Activated B cell treated with CpG ODN at 0.5 μM for 24 hours (primary cell): ENCODE measurements at regions of chr3 and their contacts with region 1.

Region 1: GRCh38 chr3:12810013-12810780 is 13.7 kb downstream of the CAND2 start:
- DNase-seq: peak; percentile 93
- ATAC-seq: peak; percentile 100
- H3K4me3 Mint-ChIP-seq: peak overlapping the region; percentile 69
- H3K27ac Mint-ChIP-seq: peak overlapping the region; percentile 50
- H3K4me1 Mint-ChIP-seq: peaks cover 9% of the 10 kb centered on the region
- H3K27me3 Mint-ChIP-seq: no peaks in the 10 kb centered on the region
- CTCF ChIP-seq: no peak

Region 2: DNA sequence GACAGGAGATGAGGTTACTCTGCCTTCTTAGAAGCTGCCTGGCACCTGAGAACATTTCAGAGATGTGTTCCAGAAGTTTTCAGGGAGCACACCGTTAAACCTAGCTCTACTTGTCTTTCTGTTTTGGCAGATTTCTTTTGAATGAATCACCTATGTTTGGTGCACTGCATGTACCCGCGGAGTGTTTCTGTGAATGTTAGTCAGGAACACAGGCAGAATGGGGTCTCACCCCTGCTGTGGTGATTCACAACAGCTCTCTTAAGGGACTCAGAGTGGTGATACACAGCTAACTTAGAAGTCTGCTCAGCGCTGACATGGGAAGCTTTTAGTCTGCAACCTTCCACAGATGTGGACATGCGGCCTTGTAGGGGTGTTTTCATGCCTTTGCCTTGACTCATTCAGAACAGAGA is 301.9 kb before region 1 on chr3:
- CTCF ChIA-PET with region 1: no interaction called
- POLR2A ChIA-PET with region 1: no interaction called
- intact Hi-C with region 1: no loop called
- DNase-seq: no peak
- ATAC-seq: no peak
- H3K4me3 Mint-ChIP-seq: no peak overlapping the region
- H3K27ac Mint-ChIP-seq: no peak overlapping the region
- H3K4me1 Mint-ChIP-seq: no peaks in the 10 kb centered on the region
- H3K27me3 Mint-ChIP-seq: no peaks in the 10 kb centered on the region
- CTCF ChIP-seq: no peak

Region 3: GRCh38 chr3:12663936-12664908 is 146.0 kb before region 1 on chr3 and contains the start of gene RAF1:
- CTCF ChIA-PET with region 1: no interaction called
- POLR2A ChIA-PET with region 1: interaction called, 6 read pairs
- intact Hi-C with region 1: loop called (anchors 1 kb)
- DNase-seq: peak; percentile 96
- ATAC-seq: peak; percentile 94
- H3K4me3 Mint-ChIP-seq: peak within 1 kb of the TSS; percentile 98
- H3K27ac Mint-ChIP-seq: peak within 1 kb of the TSS; percentile 98
- H3K4me1 Mint-ChIP-seq: peaks cover 37% of the 10 kb centered on the region
- H3K27me3 Mint-ChIP-seq: no peaks in the 10 kb centered on the region
- CTCF ChIP-seq: no peak
- total RNA-seq, gene RAF1: 89.9 and 103 TPM in 2 replicates

Region 4: GRCh38 chr3:12719984-12720898 is 90.0 kb before region 1 on chr3:
- CTCF ChIA-PET with region 1: interaction called, 3 read pairs
- POLR2A ChIA-PET with region 1: no interaction called
- intact Hi-C with region 1: loop called (anchors 1 kb)
- DNase-seq: peak; percentile 45
- ATAC-seq: peak; percentile 99
- H3K4me3 Mint-ChIP-seq: peak overlapping the region; percentile 74
- H3K27ac Mint-ChIP-seq: peak overlapping the region; percentile 69
- H3K4me1 Mint-ChIP-seq: peaks cover 7% of the 10 kb centered on the region
- H3K27me3 Mint-ChIP-seq: peaks cover 3% of the 10 kb centered on the region
- CTCF ChIP-seq: peak; percentile 93

Region 5: DNA sequence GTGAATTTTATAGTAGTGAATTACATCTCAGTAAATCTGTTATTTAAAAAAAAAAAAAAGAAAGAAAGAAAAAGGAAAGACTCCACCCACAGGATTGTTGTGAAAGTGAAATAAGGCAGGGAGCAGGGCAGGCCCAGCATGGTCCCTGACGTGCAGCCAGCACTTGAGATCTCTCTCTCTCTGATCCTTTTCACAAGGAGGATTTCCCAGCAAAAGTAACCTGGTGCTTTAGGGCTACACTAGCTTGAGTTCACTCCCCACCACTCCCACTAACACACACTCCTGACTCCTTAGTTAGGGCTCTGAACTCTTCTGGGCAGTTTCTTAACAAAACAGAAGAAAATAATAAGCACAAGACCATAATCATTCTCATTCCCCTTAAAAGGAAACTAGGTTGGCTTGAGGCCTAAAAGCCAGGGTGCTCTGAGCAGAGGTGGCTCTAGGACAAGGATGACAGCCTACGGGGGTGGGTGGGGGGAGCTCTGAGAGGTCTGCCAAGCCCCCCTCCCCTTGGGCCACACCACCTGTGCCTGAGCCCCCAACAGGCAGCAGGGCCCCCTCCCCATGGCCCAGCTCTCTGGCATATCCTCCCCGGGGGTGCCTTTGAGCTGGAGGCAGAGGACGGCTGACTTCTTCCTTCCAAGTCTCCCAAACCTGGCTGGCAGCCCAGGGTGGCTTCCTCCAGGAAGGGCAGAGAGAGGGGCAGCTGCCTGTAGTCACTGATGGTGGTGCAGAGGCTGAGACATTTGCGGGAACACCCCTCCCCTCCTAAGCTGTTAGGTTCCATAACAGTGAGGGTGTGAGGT is 52.0 kb before region 1 on chr3:
- CTCF ChIA-PET with region 1: no interaction called
- POLR2A ChIA-PET with region 1: no interaction called
- intact Hi-C with region 1: loop called (anchors 1 kb)
- DNase-seq: no peak
- ATAC-seq: no peak
- H3K4me3 Mint-ChIP-seq: no peak overlapping the region
- H3K27ac Mint-ChIP-seq: peak overlapping the region; percentile 35
- H3K4me1 Mint-ChIP-seq: peaks cover 17% of the 10 kb centered on the region
- H3K27me3 Mint-ChIP-seq: peaks cover 11% of the 10 kb centered on the region
- CTCF ChIP-seq: no peak

Region 6: GRCh38 chr3:12841149-12841970 is 31.2 kb after region 1 on chr3 and contains the start of gene RPL32:
- CTCF ChIA-PET with region 1: interaction called, 18 read pairs
- POLR2A ChIA-PET with region 1: interaction called, 21 read pairs
- intact Hi-C with region 1: loop called (anchors 1 kb)
- DNase-seq: peak; percentile 78
- ATAC-seq: peak; percentile 92
- H3K4me3 Mint-ChIP-seq: peak within 1 kb of the TSS; percentile 96
- H3K27ac Mint-ChIP-seq: peak within 1 kb of the TSS; percentile 100
- H3K4me1 Mint-ChIP-seq: peaks cover 48% of the 10 kb centered on the region
- H3K27me3 Mint-ChIP-seq: no peaks in the 10 kb centered on the region
- CTCF ChIP-seq: no peak
- total RNA-seq, gene RPL32: 2,996 and 3,448 TPM in 2 replicates

Region 7: GRCh38 chr3:12967606-12968351 is 157.6 kb after region 1 on chr3:
- CTCF ChIA-PET with region 1: no interaction called
- POLR2A ChIA-PET with region 1: no interaction called
- intact Hi-C with region 1: loop called (anchors 1 kb)
- DNase-seq: peak; percentile 77
- ATAC-seq: peak; percentile 96
- H3K4me3 Mint-ChIP-seq: peak overlapping the region; percentile 72
- H3K27ac Mint-ChIP-seq: peak overlapping the region; percentile 20
- H3K4me1 Mint-ChIP-seq: peaks cover 86% of the 10 kb centered on the region
- H3K27me3 Mint-ChIP-seq: no peaks in the 10 kb centered on the region
- CTCF ChIP-seq: no peak

Region 8: DNA sequence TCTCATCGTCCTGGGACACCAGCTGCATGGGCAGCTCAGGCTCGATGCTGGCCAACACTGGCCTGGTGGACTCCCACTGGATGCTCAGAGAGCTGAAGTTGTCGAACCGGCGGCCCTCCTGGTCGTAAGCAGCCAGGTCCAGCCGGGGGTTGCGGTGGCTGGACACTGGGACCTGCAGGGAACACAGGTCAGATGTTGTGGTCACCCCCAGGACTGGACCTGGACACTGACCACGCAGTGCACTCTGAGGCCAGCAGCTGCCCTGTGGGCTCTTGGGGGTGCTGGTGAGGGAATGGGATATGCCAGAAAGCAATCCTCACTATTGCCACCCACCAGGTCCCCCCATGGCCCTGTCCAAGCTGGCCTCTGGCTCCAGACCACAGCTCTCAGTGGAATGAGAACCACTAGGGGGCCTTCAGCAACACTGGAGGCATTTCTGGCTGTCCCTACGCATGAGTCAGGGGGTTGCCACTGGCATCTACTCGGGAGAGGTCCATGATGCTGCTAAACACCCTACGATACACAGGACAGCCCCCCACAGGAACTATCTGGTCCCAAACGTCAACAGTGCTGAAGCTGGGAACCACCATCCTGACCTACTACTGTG is 543.8 kb after region 1 on chr3:
- CTCF ChIA-PET with region 1: no interaction called
- POLR2A ChIA-PET with region 1: no interaction called
- intact Hi-C with region 1: no loop called
- DNase-seq: no peak
- ATAC-seq: no peak
- H3K4me3 Mint-ChIP-seq: no peak overlapping the region
- H3K27ac Mint-ChIP-seq: no peak overlapping the region
- H3K4me1 Mint-ChIP-seq: peaks cover 20% of the 10 kb centered on the region
- H3K27me3 Mint-ChIP-seq: no peaks in the 10 kb centered on the region
- CTCF ChIP-seq: no peak